SK-N-SH (cell line): ENCODE measurements at regions of chr11 and their contacts with region 1.

Region 1: GRCh38 chr11:17906436-17906835 is 106.4 kb downstream of the SERGEF start:
- DNase-seq: peak; percentile 62
- H3K4me3 ChIP-seq: no peak overlapping the region
- H3K27ac ChIP-seq: no peak overlapping the region
- H3K4me1 ChIP-seq: peaks cover 0 to 9% of the 10 kb centered on the region in 2 experiments; a peak in 2 of 4 replicates
- H3K27me3 ChIP-seq: no peaks in the 10 kb centered on the region
- CTCF ChIP-seq: peak; percentile 35
- EP300 ChIP-seq: no peak
- RAD21 ChIP-seq: peak; percentile 71

Region 2: GRCh38 chr11:17770048-17770652 is 136.3 kb before region 1 on chr11:
- CTCF ChIA-PET with region 1: interaction called, 13 read pairs
- POLR2A ChIA-PET with region 1: no interaction called
- DNase-seq: peak; percentile 52
- H3K4me3 ChIP-seq: no peak overlapping the region
- H3K27ac ChIP-seq: no peak overlapping the region
- H3K4me1 ChIP-seq: peaks cover 0 to 14% of the 10 kb centered on the region in 2 experiments; a peak in 2 of 4 replicates
- H3K27me3 ChIP-seq: no peaks in the 10 kb centered on the region
- CTCF ChIP-seq: peak; percentile 28; the same call in 1 of the 2 replicates
- EP300 ChIP-seq: no peak
- RAD21 ChIP-seq: no peak

Region 3: DNA sequence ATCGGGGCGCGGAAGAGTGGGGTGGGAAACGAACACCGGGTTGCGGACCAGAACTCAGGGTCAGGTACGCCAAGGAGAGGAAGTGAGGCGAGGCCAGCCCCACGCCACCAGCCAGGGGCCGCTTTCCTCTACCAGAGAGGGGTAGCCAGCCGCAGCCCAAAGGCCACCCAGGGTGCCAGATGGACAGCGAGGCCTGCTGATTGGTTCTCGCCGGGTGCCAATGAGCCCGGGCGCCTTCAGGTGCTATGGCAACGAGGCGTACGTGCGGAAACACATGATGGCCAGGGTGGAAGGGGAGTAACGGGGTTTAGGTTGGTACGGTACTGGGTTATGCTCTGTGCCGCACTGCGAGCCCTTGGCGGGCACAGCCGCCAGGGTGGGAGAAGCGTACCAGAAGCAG is 22.5 kb before region 1 on chr11:
- CTCF ChIA-PET with region 1: interaction called, 17 read pairs
- POLR2A ChIA-PET with region 1: no interaction called
- DNase-seq: no peak
- H3K4me3 ChIP-seq: no peak overlapping the region
- H3K27ac ChIP-seq: no peak overlapping the region
- H3K4me1 ChIP-seq: no peaks in the 10 kb centered on the region; a peak in 2 of 4 replicates
- H3K27me3 ChIP-seq: no peaks in the 10 kb centered on the region
- CTCF ChIP-seq: no peak
- EP300 ChIP-seq: no peak
- RAD21 ChIP-seq: no peak

Region 4: GRCh38 chr11:17921659-17922415 is 15.4 kb after region 1 on chr11:
- CTCF ChIA-PET with region 1: interaction called, 18 read pairs
- POLR2A ChIA-PET with region 1: no interaction called
- DNase-seq: no peak
- H3K4me3 ChIP-seq: no peak overlapping the region
- H3K27ac ChIP-seq: no peak overlapping the region
- H3K4me1 ChIP-seq: peaks cover 0 to under 1% of the 10 kb centered on the region in 2 experiments; a peak in 1 of 4 replicates
- H3K27me3 ChIP-seq: no peaks in the 10 kb centered on the region
- CTCF ChIP-seq: no peak
- EP300 ChIP-seq: no peak
- RAD21 ChIP-seq: no peak

Region 5: GRCh38 chr11:17972987-17973386 is 66.6 kb after region 1 on chr11:
- CTCF ChIA-PET with region 1: interaction called, 30 read pairs
- POLR2A ChIA-PET with region 1: no interaction called
- DNase-seq: peak; percentile 61
- H3K4me3 ChIP-seq: peak overlapping the region in 1 of 2 experiments; percentile 49; a peak in 1 of 4 replicates
- H3K27ac ChIP-seq: no peak overlapping the region
- H3K4me1 ChIP-seq: no peaks in the 10 kb centered on the region
- H3K27me3 ChIP-seq: no peaks in the 10 kb centered on the region
- CTCF ChIP-seq: peak; percentile 57
- EP300 ChIP-seq: no peak
- RAD21 ChIP-seq: peak; percentile 82

Region 6: DNA sequence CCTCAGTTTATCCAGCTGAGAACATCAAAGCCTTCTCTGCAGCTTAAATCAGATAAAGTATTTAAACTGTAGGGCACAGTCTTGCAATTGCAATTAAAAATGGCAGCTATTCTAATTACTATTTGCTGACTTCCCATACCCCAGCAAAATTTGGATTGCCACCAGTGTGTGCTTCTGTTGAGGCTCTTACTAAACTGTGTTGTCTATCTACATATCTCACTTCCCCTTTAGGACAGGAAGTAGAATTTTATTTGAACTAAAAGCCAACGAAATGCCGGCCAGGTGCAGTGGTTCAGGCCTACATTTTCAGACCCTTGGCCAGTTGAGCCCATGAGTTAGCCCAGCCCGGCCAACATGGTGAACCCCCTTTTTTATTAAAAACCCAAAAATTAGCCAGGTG is 323.1 kb after region 1 on chr11:
- CTCF ChIA-PET with region 1: no interaction called
- POLR2A ChIA-PET with region 1: no interaction called
- DNase-seq: no peak
- H3K4me3 ChIP-seq: no peak overlapping the region
- H3K27ac ChIP-seq: no peak overlapping the region
- H3K4me1 ChIP-seq: no peaks in the 10 kb centered on the region
- H3K27me3 ChIP-seq: no peaks in the 10 kb centered on the region
- CTCF ChIP-seq: no peak
- EP300 ChIP-seq: no peak
- RAD21 ChIP-seq: no peak

Region 7: DNA sequence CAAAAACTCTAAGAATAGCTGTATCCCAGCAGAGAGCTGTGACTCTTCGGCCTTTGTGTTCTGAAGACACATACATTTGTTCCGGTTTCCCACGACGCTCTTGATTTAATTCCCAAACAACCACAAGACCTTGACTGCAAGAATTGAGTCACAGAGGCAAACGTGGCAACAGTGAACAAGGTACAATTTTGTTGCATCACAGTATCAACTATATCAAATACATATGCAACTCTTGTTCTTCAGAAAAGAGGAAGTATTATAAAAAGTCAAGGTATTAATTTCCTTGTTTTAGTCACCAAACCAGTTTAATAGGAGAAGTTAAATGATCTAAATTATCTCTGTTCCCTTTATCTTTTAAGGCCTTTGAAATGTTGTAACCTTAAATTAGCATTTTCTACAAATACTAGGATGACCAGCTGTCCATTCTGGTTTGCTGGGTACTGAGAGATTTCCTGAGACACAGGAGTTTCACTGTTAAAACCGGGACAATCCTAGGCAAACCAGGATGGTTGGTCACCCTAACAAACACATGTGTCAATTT is 404.4 kb after region 1 on chr11:
- CTCF ChIA-PET with region 1: no interaction called
- POLR2A ChIA-PET with region 1: no interaction called
- DNase-seq: no peak
- H3K4me3 ChIP-seq: no peak overlapping the region
- H3K27ac ChIP-seq: no peak overlapping the region
- H3K4me1 ChIP-seq: peaks cover 0 to 8% of the 10 kb centered on the region in 2 experiments; a peak in 3 of 4 replicates
- H3K27me3 ChIP-seq: no peaks in the 10 kb centered on the region
- CTCF ChIP-seq: no peak
- EP300 ChIP-seq: no peak
- RAD21 ChIP-seq: no peak